ENCODE measurements at regions of chr10 and their contacts with region 1.

Region 1: DNA sequence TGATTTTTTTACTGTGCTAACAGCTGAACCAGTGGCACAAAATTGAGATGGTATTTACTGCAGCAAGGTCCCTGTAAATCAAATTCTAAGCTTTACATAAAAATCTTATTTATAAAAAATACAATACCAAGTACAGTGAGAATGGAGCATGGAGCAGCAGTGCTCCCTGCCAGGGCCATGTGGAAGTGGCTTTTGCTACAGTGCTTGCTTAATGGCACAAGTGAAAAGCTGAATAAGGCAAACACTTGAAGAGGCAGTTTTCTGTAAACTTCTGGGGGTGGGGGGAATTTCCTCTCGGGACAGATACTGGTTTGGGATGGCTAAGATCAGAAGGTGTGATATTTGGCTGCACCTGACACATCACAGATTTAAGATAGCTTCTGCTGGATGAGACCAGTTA is 27.5 kb downstream of the AP3M1 start:
- H3K4me3 ChIP-seq: no peak overlapping the region
- H3K27ac ChIP-seq: no peak overlapping the region
- H3K4me1 ChIP-seq: no peaks in the 10 kb centered on the region
- CTCF ChIP-seq: no peak

Region 2: DNA sequence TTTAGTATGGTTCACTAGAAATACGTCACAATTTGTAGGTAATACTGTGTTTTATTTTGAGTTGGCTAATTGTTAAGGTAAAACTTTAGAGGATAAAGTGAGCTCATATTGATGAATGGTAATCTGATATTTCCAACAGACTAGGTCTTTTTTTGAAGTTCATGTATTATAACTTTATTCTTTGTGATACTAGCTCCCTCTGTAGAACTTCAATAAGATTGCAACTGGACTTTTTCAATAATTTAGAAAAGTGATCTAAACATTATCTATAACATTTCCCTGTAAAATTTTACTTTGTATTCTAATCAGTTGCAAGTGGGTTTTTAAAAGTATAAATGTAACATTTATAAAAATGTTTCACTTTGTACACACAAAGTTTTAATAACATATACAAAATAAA is 111.5 kb after region 1 on chr10:
- CTCF ChIA-PET with region 1: interaction called, 14 read pairs
- POLR2A ChIA-PET with region 1: interaction called, 3 read pairs
- H3K4me3 ChIP-seq: no peak overlapping the region
- H3K27ac ChIP-seq: no peak overlapping the region
- H3K4me1 ChIP-seq: no peaks in the 10 kb centered on the region
- CTCF ChIP-seq: no peak

Measured in HEK293 (cell line).